ENCODE measurements at regions of chr2 and their contacts with region 1.

Region 1: GRCh38 chr2:101223814-101224231 is 28.9 kb upstream of the CNOT11 start:
- DNase-seq: no peak
- H3K4me3 ChIP-seq: no peak overlapping the region
- H3K27ac ChIP-seq: no peak overlapping the region
- H3K4me1 ChIP-seq: no peaks in the 10 kb centered on the region
- H3K27me3 ChIP-seq: no peaks in the 10 kb centered on the region
- CTCF ChIP-seq: no peak

Region 2: GRCh38 chr2:100625717-100626116 is 598.1 kb before region 1 on chr2:
- CTCF ChIA-PET with region 1: no interaction called
- dilution Hi-C with region 1: loop called (anchors 10 kb)
- in situ Hi-C with region 1: loop called in 1 of 2 experiments (anchors 25 kb)
- intact Hi-C with region 1: no loop called
- DNase-seq: no peak
- H3K4me3 ChIP-seq: no peak overlapping the region
- H3K27ac ChIP-seq: no peak overlapping the region
- H3K4me1 ChIP-seq: no peaks in the 10 kb centered on the region
- H3K27me3 ChIP-seq: peaks cover 11% of the 10 kb centered on the region
- CTCF ChIP-seq: no peak

Region 3: GRCh38 chr2:100832885-100833284 is 390.9 kb before region 1 on chr2:
- CTCF ChIA-PET with region 1: no interaction called
- dilution Hi-C with region 1: no loop called
- in situ Hi-C with region 1: no loop called
- intact Hi-C with region 1: no loop called
- DNase-seq: no peak
- H3K4me3 ChIP-seq: no peak overlapping the region
- H3K27ac ChIP-seq: no peak overlapping the region
- H3K4me1 ChIP-seq: peaks cover 11% of the 10 kb centered on the region
- H3K27me3 ChIP-seq: no peaks in the 10 kb centered on the region
- CTCF ChIP-seq: no peak

Region 4: DNA sequence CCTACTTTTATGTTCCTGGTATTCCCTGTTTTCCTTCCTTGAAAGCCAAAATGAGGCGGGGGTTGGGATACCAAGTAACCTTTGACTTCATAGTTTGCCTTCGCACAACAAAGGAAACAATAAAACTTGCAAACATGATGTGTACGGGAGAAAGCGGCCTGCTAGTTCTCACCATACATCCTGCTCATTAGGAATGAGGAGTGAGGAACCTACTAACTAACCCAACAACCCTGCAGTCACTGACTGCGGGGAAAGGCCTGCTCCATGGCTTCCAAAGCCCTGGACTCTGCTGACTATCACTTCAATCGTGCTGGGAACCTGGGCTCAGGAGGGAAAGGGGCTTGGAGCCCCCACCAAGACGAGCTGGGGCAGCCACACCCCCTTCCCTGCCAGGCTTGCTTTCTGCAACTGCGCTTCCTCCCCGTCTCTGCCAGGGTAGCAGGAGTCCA is 197.5 kb before region 1 on chr2:
- CTCF ChIA-PET with region 1: no interaction called
- dilution Hi-C with region 1: no loop called
- in situ Hi-C with region 1: loop called in 1 of 2 experiments (anchors 10 kb)
- intact Hi-C with region 1: no loop called
- DNase-seq: no peak
- H3K4me3 ChIP-seq: no peak overlapping the region
- H3K27ac ChIP-seq: no peak overlapping the region
- H3K4me1 ChIP-seq: no peaks in the 10 kb centered on the region
- H3K27me3 ChIP-seq: no peaks in the 10 kb centered on the region
- CTCF ChIP-seq: no peak

Region 5: GRCh38 chr2:101080211-101081068 is 143.4 kb before region 1 on chr2:
- CTCF ChIA-PET with region 1: no interaction called
- dilution Hi-C with region 1: no loop called
- in situ Hi-C with region 1: no loop called
- intact Hi-C with region 1: no loop called
- DNase-seq: no peak
- H3K4me3 ChIP-seq: no peak overlapping the region
- H3K27ac ChIP-seq: no peak overlapping the region
- H3K4me1 ChIP-seq: no peaks in the 10 kb centered on the region
- H3K27me3 ChIP-seq: no peaks in the 10 kb centered on the region
- CTCF ChIP-seq: no peak